Activated CD4-positive, alpha-beta T cell treated with anti-CD3 and anti-CD28 coated beads for 36 hours (primary cell): ENCODE measurements at regions of chr15 and their contacts with region 1.

Region 1: GRCh38 chr15:52018693-52019387 is at the start of gene MAPK6:
- DNase-seq: peak; percentile 97
- ATAC-seq: peak; percentile 76
- H3K4me3 Mint-ChIP-seq: peak within 1 kb of the TSS; percentile 86
- H3K27ac Mint-ChIP-seq: peak within 1 kb of the TSS; percentile 96
- H3K4me1 Mint-ChIP-seq: peaks cover 38% of the 10 kb centered on the region
- H3K27me3 Mint-ChIP-seq: peaks cover 5% of the 10 kb centered on the region
- total RNA-seq, gene MAPK6: 27.3 to 28.1 TPM

Region 2: GRCh38 chr15:51878446-51879386 is 140.1 kb before region 1 on chr15:
- CTCF ChIA-PET with region 1: no interaction called
- POLR2A ChIA-PET with region 1: no interaction called
- intact Hi-C with region 1: no loop called
- DNase-seq: no peak
- ATAC-seq: no peak
- H3K4me3 Mint-ChIP-seq: no peak overlapping the region
- H3K27ac Mint-ChIP-seq: no peak overlapping the region
- H3K4me1 Mint-ChIP-seq: peaks cover 25% of the 10 kb centered on the region
- H3K27me3 Mint-ChIP-seq: no peaks in the 10 kb centered on the region

Region 3: DNA sequence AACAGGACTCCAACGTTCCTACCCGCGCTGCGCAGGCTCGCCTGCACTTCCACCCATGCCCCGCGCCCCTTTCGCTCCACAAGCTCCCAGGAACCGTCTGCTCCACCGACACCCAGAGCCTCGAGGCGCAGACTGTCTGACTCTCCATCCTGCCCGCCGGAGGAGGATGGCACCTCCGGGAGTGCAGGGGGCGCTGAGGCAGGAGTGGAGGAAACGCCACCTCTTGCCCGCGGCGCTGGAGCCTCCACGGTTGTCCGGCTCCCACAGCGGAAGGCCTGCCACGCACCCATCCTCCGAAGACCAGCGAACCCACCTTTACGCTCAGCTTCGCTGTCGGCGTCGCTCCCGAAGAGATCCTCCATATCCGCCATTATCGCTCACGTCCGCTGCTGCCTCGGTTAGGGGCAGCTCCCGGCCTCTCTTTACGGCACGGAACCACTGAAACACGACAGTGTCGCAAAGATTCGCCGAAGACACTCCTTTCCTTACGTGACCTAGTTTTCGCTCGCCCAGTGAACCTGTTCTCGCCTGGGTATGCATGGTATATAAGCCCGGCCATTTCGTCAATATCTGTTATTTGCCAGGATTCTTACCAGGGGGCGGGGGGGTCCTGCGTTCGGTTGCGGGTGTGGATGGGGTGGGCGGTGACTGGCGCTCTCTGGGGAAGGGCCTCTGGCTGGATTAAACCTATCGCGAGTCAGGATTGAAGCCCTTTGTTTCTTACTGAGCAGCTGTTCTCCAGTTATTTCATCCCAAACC is 47.3 kb before region 1 on chr15 and contains the start of gene LEO1:
- CTCF ChIA-PET with region 1: no interaction called
- POLR2A ChIA-PET with region 1: no interaction called
- intact Hi-C with region 1: loop called in 1 of 2 experiments (anchors 2 kb)
- DNase-seq: peak; percentile 93
- ATAC-seq: peak; percentile 95
- H3K4me3 Mint-ChIP-seq: peak within 1 kb of the TSS; percentile 100
- H3K27ac Mint-ChIP-seq: peak within 1 kb of the TSS; percentile 94
- H3K4me1 Mint-ChIP-seq: peaks cover 21% of the 10 kb centered on the region
- H3K27me3 Mint-ChIP-seq: no peaks in the 10 kb centered on the region
- total RNA-seq, gene LEO1: 31.4 to 40.0 TPM

Region 4: DNA sequence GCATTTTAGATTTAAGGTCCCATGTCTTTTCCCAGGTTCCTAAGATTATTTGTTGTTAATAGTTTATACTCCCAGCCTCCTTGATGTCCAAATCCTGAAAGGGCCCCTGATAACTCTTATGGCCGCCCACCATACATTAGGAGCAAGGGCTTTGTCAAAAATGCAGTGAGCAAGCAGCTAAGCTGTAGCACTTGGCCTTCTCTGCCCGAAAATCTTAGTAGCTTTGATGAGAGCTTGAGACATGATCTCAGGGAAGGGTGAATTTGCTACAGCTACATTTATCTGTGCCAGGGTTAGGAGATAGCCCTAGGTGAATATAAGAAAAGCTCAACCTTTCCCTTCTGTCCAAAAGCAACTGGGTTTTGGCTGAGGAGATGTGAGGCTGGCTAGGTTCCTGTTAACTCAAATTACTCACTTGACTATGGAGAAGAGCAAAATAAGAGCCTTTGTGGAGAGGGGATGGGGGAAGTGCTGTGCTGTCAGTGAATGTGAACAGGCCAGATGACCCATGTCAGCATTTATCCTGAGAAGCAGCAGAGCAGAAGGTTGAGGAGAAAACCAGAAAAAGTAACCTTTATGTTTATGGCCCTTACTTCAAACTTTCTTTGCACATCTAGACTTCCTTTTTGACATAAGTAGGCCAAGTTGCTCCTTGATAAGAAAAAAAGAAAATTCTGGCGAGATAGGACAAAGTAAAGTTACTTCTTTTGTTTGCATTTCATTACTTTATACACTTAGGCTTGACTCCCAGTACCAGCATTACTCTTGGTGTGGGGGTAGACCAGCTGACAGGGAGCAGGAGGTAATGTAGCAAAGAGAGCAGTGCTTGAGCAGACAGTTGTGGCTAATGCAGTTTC is 21.3 kb after region 1 on chr15:
- CTCF ChIA-PET with region 1: interaction called, 5 read pairs
- POLR2A ChIA-PET with region 1: interaction called, 14 read pairs
- intact Hi-C with region 1: loop called in 1 of 2 experiments (anchors 2 kb)
- DNase-seq: no peak
- ATAC-seq: no peak
- H3K4me3 Mint-ChIP-seq: no peak overlapping the region
- H3K27ac Mint-ChIP-seq: peak overlapping the region; percentile 34
- H3K4me1 Mint-ChIP-seq: peaks cover 58% of the 10 kb centered on the region
- H3K27me3 Mint-ChIP-seq: no peaks in the 10 kb centered on the region

Region 5: GRCh38 chr15:52695183-52695582 is 676.3 kb after region 1 on chr15:
- CTCF ChIA-PET with region 1: no interaction called
- POLR2A ChIA-PET with region 1: no interaction called
- intact Hi-C with region 1: no loop called
- DNase-seq: no peak
- ATAC-seq: no peak
- H3K4me3 Mint-ChIP-seq: no peak overlapping the region
- H3K27ac Mint-ChIP-seq: no peak overlapping the region
- H3K4me1 Mint-ChIP-seq: no peaks in the 10 kb centered on the region
- H3K27me3 Mint-ChIP-seq: no peaks in the 10 kb centered on the region